ENCODE measurements at regions of chr20 and their contacts with region 1.

Region 1: GRCh38 chr20:12966468-12967341 is 42.1 kb upstream of the SPTLC3 start:
- DNase-seq: no peak

Region 2: DNA sequence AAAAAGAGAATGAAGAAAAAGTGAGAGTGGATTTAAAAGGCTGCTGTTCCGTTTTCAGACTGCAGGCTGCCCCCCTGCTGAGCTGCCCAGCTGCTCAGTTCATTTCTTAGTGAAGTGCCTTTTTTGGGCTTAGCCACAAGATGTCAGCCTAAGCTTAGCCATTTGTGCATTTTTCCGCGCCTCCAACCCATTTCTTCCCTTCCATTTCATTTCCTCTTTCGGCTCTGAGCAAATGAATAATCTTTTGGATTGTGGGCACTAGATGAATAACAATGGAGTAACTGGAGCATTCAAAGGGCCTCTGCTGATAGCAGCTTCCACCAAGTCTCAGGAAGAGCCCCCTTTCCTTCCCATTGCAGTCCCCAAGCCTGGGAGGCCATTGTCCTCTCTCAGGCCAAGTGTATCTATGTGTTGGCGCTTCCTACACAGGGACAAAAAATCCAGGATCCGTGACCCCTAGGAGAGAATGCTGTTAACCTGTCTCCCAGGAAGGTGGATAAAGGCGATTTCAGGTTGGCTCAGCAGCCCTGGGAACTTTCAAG is 41.4 kb before region 1 on chr20:
- intact Hi-C with region 1: loop called in 1 of 2 experiments (anchors 2 kb)
- DNase-seq: no peak

Region 3: GRCh38 chr20:13101706-13102105 is 135.0 kb after region 1 on chr20:
- intact Hi-C with region 1: loop called in 1 of 2 experiments (anchors 5 kb)
- DNase-seq: no peak